ENCODE measurements at regions of chr21 and their contacts with region 1.

Region 1: GRCh38 chr21:41283211-41283818 is 33.3 kb upstream of the FAM3B start:
- DNase-seq: peak; percentile 70
- H3K4me3 ChIP-seq: no peak overlapping the region
- H3K27ac ChIP-seq: no peak overlapping the region
- H3K4me1 ChIP-seq: no peaks in the 10 kb centered on the region
- H3K27me3 ChIP-seq: peaks cover 2 to 8% of the 10 kb centered on the region in 2 experiments
- CTCF ChIP-seq: peak; percentile 63 to 65
- POLR2A ChIP-seq: no peak

Region 2: DNA sequence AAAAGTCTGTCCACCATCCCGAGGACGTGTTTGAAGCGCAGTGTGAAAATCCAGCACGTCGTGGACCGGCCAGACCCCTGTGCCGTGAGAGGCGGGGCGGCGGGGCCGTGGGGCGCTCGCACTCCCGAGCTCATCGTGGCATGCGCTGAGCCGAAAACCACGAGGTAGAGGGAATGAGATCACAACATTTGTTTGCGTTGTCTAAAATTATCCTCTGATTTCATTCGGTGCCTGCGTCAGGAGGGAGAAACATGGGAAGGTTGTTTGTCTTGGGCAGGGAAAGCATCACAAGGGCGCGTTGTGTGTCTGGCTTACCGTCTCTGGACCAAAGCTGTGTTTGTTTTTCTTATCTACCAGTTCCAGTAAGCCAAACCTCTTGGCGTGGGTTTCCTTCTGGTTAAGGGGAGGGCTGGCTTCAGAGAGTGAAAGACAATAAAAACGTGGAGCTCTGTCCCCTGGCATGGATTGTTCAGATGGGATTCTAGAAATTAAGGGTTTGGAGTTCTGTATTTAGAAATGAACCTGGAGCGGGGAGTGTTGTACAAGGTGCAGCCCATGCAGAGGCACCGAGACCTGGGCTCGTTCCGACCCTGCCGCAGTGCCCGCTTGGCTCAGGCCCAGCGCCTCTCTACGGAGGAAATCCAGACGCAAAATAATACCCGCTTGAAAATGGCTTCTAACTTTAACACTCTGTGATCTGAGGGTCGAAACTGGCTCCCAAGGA is 35.6 kb before region 1 on chr21:
- CTCF ChIA-PET with region 1: interaction called, 10 read pairs
- POLR2A ChIA-PET with region 1: no interaction called
- dilution Hi-C with region 1: no loop called
- intact Hi-C with region 1: no loop called
- DNase-seq: peak; percentile 97
- H3K4me3 ChIP-seq: no peak overlapping the region
- H3K27ac ChIP-seq: peak overlapping the region; percentile 99
- H3K4me1 ChIP-seq: peaks cover 36% of the 10 kb centered on the region
- H3K27me3 ChIP-seq: no peaks in the 10 kb centered on the region
- CTCF ChIP-seq: no peak
- POLR2A ChIP-seq: no peak

Region 3: GRCh38 chr21:41349619-41350390 is 66.5 kb after region 1 on chr21:
- CTCF ChIA-PET with region 1: no interaction called
- POLR2A ChIA-PET with region 1: no interaction called
- dilution Hi-C with region 1: no loop called
- intact Hi-C with region 1: no loop called
- DNase-seq: no peak
- H3K4me3 ChIP-seq: no peak overlapping the region
- H3K27ac ChIP-seq: no peak overlapping the region
- H3K4me1 ChIP-seq: no peaks in the 10 kb centered on the region
- H3K27me3 ChIP-seq: peaks cover 0 to 3% of the 10 kb centered on the region in 2 experiments
- CTCF ChIP-seq: no peak
- POLR2A ChIP-seq: no peak

Region 4: DNA sequence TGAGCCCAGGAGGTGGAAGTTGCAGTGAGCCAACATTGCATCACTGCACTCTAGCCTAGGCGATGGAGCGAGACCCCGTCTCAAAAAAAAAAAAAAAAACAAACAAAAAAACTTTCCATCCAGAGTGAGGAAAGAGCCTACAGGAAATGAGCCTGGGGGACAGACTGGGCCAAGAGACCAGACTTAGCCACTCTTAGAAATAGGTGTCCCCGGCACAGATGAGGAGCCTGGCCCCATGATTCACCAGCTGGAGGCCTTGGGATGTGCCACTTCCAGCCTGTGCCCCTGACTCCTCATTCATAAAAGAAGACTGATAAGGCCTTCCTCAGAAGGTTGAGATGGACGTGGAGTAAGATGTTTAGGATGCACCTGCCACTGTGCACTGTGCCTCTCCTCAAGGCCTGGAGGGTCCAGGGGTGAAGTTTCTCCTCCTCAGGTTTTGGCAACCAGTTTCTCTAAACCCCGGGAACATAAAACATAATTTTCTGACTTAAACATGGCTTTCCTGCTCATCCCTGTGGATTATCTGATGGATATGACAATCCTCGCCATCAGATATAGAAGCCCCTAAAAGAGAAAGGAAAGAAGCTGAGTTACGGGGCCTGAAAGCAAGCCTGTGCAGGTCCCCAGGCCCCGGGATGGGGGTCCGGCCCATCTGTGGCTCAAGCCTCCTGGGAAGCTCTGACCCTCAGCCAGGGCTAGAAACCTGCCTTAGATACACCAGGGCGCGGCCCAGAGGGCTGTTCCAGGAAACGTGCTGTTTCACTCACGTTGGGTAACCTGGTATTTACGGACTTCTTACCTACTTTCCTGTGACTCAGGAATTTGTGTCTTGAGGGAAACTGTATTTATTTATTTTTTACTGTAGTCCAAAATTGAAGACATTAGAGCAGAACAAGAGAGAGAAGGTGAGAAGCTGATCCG is 168.7 kb after region 1 on chr21:
- CTCF ChIA-PET with region 1: interaction called, 220 read pairs
- POLR2A ChIA-PET with region 1: no interaction called
- dilution Hi-C with region 1: no loop called
- intact Hi-C with region 1: no loop called
- DNase-seq: no peak
- H3K4me3 ChIP-seq: no peak overlapping the region
- H3K27ac ChIP-seq: no peak overlapping the region
- H3K4me1 ChIP-seq: no peaks in the 10 kb centered on the region
- H3K27me3 ChIP-seq: no peaks in the 10 kb centered on the region
- CTCF ChIP-seq: no peak
- POLR2A ChIP-seq: no peak

Region 5: DNA sequence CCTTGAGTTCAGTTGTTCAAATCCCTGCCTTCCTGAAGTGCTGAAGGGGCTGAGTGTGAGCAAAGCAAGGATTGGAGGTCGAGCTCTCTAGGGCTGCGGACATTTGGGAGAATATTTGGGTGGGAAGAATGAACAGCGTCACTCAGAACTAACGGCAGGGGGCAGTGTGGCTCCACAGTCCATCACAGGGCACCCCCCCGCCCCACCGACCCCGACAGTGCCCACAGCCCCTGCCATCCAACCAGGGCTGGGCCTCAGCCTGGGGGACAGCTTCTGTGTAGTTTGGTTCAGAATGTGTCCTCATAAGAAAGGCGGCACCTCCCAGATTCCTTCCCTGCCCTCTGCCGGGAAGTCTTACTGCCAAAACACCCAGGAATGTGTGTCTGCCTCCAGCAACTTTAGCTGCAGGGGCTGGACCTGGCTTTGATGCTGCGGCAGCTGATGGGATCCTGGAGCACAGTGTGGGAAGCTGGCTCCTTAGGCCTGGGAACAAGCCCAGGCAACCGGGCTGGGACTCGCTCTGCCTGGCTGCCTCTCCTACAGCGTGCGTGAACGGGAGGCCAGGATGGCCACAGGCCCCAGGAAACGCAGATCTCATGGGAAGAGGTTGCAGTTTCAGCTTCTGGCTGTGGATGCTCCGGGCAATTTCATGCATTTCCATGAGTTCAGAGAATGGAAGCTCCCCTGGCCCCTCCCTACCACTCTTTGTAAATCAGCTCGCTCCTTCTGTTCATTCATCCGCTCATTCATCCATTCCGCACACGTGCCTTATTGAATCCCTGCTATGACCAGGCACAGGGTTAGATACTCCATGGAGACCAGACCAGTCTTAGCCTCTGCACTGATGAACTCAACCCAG is 329.6 kb after region 1 on chr21:
- CTCF ChIA-PET with region 1: interaction called, 15 read pairs
- POLR2A ChIA-PET with region 1: no interaction called
- dilution Hi-C with region 1: no loop called
- intact Hi-C with region 1: loop called (anchors 1 kb)
- DNase-seq: no peak
- H3K4me3 ChIP-seq: no peak overlapping the region
- H3K27ac ChIP-seq: no peak overlapping the region
- H3K4me1 ChIP-seq: no peaks in the 10 kb centered on the region
- H3K27me3 ChIP-seq: peaks cover 0 to 2% of the 10 kb centered on the region in 2 experiments
- CTCF ChIP-seq: peak; percentile 50 to 76
- POLR2A ChIP-seq: no peak

Region 6: DNA sequence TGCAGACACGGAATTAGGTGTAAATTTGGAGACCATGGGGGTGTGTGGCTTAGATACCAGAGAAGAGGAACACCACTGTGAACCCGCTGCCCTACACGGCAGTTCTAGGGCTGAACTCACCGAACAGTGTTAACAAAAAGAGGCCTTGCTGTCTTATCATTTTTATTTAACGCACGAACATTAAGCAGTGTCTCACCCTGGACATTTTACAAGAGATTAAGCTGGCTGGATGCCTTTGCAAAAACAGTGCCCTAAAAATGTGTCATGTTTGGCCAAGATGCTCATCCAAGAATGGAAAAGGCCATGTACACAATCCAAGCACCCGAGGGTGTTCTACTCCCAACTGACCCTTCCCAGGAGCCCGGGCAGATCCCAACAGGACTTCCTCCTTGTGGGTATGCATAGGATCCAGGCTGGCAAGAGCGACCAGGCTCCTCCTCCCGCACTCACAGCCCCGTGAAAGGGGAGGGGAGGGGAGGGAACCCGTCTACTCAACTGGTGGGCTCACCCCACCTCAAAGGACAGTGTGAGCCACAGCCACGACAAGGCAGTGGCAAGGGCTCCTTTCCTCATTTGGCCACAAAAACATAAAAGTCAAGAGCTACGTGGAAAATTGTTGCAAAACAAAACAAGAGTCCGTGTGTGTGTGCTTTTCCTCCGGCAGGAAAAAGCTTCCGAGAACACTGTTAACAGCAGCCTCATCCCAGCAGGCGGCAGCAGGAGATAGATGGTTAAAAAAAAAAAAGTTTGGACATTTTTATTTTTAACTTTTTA is 650.2 kb after region 1 on chr21:
- CTCF ChIA-PET with region 1: interaction called, 11 read pairs
- POLR2A ChIA-PET with region 1: no interaction called
- dilution Hi-C with region 1: no loop called
- intact Hi-C with region 1: no loop called
- DNase-seq: peak; percentile 78
- H3K4me3 ChIP-seq: peak overlapping the region in 2 of 3 experiments; percentile 15 to 49
- H3K27ac ChIP-seq: peak overlapping the region; percentile 80
- H3K4me1 ChIP-seq: peaks cover 26% of the 10 kb centered on the region
- H3K27me3 ChIP-seq: no peaks in the 10 kb centered on the region
- CTCF ChIP-seq: peak; percentile 38 to 44
- POLR2A ChIP-seq: no peak

Region 7: GRCh38 chr21:41966041-41966684 is 682.8 kb after region 1 on chr21:
- CTCF ChIA-PET with region 1: no interaction called
- POLR2A ChIA-PET with region 1: no interaction called
- dilution Hi-C with region 1: no loop called
- intact Hi-C with region 1: no loop called
- DNase-seq: no peak
- H3K4me3 ChIP-seq: no peak overlapping the region
- H3K27ac ChIP-seq: no peak overlapping the region
- H3K4me1 ChIP-seq: peaks cover 11% of the 10 kb centered on the region
- H3K27me3 ChIP-seq: no peaks in the 10 kb centered on the region
- CTCF ChIP-seq: no peak
- POLR2A ChIP-seq: no peak

Measured in endothelial cell of umbilical vein (primary cell).